PC-3 (cell line): ENCODE measurements at regions of chr10 and their contacts with region 1.

Region 1: DNA sequence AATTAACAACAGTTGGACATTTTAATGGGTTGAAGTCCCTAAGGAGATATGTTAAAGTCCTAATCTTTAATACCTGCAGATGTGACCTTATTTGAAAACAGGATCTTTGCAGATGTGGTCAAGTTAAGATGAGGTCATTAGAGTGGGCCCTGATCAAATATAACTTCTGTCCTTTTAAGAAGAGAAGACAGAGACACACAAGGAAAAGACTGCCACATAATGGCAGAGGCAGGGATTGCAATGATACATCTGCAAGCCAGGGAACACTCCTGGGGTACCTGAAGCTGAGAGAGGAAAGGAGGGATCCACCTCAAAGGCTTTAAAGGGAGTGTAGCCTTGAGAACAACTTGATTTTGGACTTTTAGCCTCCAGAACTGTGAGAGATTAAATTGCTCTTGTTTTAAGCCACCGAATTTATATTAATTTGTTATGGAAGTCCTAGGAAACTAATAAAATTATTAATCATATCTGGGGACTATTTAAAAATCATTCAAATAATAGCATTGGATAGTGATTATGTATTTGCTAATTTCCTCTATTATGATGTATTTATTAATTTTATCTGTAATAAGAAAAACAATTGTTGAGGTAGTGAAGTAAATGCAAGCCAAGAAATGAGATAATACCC is 700.0 kb upstream of the PCDH15 start:
- DNase-seq: peak; percentile 72
- ATAC-seq: peak; percentile 88
- H3K4me3 ChIP-seq: no peak overlapping the region
- H3K27ac ChIP-seq: no peak overlapping the region
- H3K4me1 ChIP-seq: no peaks in the 10 kb centered on the region
- H3K27me3 ChIP-seq: no peaks in the 10 kb centered on the region
- CTCF ChIP-seq: peak; percentile 90

Region 2: DNA sequence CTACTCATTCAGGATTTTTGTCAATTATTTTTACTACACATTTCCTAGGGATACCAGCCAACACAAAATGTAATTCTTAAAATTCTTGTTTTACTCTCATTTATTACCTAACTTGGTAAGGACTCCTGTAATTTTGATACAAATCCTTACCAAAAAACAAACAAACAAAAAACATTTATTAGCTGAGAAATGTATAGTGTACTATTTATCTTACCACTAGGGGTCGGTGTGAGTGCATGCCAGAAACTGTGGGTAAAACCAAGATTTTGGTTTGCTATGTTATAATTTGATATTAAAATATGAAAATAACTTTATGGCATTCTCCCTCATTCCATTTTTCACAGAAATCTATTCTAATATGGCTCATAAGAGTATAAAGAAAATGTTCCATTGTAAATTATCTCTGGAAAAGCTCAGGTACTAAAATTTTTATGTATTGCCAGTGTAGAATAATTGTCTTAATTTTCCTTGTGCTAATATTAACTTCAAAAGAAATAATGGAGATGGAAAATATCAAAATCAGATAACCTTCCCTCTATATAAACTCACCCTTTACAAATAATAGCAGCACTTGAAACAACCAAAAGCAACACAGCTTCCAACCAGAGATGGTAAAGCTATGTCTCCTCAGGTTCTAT is 409.2 kb before region 1 on chr10:
- CTCF ChIA-PET with region 1: no interaction called
- POLR2A ChIA-PET with region 1: no interaction called
- intact Hi-C with region 1: loop called (anchors 1 kb)
- DNase-seq: peak; percentile 54
- ATAC-seq: no peak
- H3K4me3 ChIP-seq: no peak overlapping the region
- H3K27ac ChIP-seq: no peak overlapping the region
- H3K4me1 ChIP-seq: no peaks in the 10 kb centered on the region
- H3K27me3 ChIP-seq: no peaks in the 10 kb centered on the region
- CTCF ChIP-seq: peak; percentile 91

Region 3: DNA sequence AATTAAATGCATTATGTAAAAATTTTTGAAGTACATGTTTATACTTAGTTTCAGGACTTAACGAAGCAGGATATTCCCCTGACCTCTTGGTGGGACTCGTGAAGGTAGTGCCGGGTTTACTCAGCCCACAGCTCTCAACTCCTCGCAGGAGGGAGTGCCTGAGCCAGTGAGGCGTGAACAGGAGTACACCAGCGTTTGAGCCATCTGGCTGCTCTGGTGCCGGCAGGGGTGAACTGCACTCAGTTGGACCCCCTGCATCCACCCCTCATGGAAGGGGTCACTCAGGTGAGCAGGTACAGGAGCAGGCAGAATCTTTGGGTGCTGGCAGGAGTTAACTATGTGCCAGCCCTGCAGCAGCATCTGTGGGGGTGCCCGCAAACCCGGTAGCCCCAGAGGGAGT is 74.9 kb before region 1 on chr10:
- CTCF ChIA-PET with region 1: no interaction called
- POLR2A ChIA-PET with region 1: no interaction called
- intact Hi-C with region 1: no loop called
- DNase-seq: no peak
- ATAC-seq: no peak
- H3K4me3 ChIP-seq: no peak overlapping the region
- H3K27ac ChIP-seq: no peak overlapping the region
- H3K4me1 ChIP-seq: no peaks in the 10 kb centered on the region
- H3K27me3 ChIP-seq: no peaks in the 10 kb centered on the region
- CTCF ChIP-seq: no peak

Region 4: DNA sequence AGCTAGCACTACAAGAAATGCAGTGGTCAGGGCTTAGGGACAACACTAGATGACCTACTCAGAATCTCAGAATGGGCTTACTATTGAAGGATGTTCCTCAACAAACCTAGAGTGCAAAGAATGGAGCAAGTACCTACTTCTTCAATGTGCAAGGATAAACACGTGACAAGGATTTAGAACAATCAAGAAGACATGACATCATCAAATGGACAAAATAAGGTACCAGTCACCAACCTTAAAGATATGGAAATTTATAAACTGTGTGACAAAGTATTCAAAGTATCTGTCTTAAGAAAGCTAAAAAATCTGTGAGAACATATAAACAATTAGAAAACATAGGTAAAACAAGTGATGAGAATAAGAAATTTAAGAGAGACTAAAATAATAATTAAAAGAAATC is 203.9 kb after region 1 on chr10:
- CTCF ChIA-PET with region 1: no interaction called
- POLR2A ChIA-PET with region 1: no interaction called
- intact Hi-C with region 1: no loop called
- DNase-seq: no peak
- ATAC-seq: no peak
- H3K4me3 ChIP-seq: no peak overlapping the region
- H3K27ac ChIP-seq: no peak overlapping the region
- H3K4me1 ChIP-seq: no peaks in the 10 kb centered on the region
- H3K27me3 ChIP-seq: no peaks in the 10 kb centered on the region
- CTCF ChIP-seq: no peak